Activated CD8-positive, alpha-beta T cell treated with anti-CD3 and anti-CD28 coated beads for 36 hours (primary cell): ENCODE measurements at regions of chr17 and their contacts with region 1.

Region 1: DNA sequence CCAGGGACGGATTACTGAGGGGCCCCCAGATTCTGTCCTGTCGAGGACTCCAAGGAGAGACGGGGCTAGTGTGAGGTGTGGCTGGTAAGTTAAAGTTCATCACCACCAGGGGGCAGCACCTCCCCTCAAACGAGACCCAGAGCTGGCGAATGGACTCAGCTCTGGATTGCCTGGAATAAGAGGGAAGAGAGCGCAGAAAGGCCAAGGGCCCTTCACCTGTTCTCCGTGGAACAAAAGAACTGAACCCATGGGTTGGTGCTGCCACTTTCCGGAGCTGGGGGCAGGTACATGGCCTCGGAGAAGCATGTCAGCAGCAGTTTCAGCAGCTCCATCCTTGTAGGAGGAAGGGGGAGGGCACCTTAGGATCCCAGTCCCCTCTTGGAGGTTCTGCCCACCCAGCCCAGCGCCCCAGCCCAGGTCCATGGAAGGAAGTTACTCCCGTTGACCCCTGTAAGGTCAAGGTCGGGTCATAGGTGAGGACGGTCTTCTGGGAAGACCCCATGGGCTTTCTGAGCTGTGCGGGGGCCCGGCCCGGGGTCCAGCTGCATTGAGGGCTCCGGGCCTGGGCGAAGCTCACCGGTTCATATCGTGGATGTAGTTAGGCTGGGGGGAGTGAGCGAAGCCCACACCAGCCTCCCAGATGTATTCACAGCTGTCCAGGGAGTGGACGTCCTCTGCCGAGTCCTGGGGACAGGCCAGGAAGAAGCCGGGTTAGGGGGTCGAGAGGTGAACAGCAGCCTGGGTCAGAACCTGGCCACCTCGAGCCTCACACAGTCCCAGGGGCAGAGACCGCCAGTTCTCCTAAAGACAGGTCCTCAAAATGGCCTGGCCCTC is 10.7 kb downstream of the HID1 start:
- DNase-seq: peak; percentile 91
- ATAC-seq: peak; percentile 79
- H3K4me3 Mint-ChIP-seq: no peak overlapping the region
- H3K27ac Mint-ChIP-seq: no peak overlapping the region
- H3K4me1 Mint-ChIP-seq: peaks cover 3% of the 10 kb centered on the region
- H3K27me3 Mint-ChIP-seq: no peaks in the 10 kb centered on the region
- CTCF ChIP-seq: peak; percentile 79

Region 2: GRCh38 chr17:74790161-74791054 is 171.5 kb before region 1 on chr17:
- CTCF ChIA-PET with region 1: interaction called, 18 read pairs
- POLR2A ChIA-PET with region 1: interaction called, 3 read pairs
- intact Hi-C with region 1: no loop called
- DNase-seq: no peak
- ATAC-seq: no peak
- H3K4me3 Mint-ChIP-seq: no peak overlapping the region
- H3K27ac Mint-ChIP-seq: peak overlapping the region; percentile 27
- H3K4me1 Mint-ChIP-seq: peaks cover 37% of the 10 kb centered on the region
- H3K27me3 Mint-ChIP-seq: no peaks in the 10 kb centered on the region
- CTCF ChIP-seq: no peak

Region 3: DNA sequence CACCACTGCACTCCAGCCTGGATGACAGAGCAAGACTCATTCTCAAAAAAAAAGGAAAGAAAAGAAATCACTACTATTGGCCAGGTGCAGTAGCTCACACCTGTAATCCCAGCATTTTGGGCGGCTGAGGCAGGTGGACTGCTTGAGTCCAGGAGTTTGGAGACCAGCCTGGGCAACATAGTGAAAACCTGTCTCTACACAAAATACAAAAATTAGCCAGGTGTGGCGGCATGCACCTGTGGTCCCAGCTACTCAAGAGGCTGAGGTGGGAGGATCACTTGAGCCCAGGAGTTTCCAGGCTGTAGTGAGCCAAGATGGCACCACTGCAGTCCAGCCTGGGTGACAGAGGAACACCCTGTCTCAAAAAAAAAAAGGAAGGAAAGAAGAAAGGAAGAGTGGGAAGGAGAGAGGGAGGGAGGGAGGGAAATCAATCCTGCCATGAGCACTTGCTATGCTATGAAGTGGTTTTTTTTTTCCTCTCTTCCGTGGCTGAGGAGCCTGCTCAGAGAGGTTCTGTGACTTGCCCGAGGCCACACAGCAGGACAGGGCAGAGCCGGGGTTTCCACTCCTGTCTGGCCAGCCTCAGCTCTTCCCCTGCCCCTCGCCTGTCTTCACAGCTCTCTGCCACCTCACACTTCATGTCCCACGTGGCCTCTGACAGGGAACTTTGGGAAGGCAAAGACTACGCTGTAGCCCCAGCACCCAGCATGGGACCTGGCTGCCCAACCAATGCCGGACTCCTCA is 113.0 kb before region 1 on chr17:
- CTCF ChIA-PET with region 1: no interaction called
- POLR2A ChIA-PET with region 1: no interaction called
- intact Hi-C with region 1: no loop called
- DNase-seq: no peak
- ATAC-seq: no peak
- H3K4me3 Mint-ChIP-seq: no peak overlapping the region
- H3K27ac Mint-ChIP-seq: no peak overlapping the region
- H3K4me1 Mint-ChIP-seq: peaks cover 2% of the 10 kb centered on the region
- H3K27me3 Mint-ChIP-seq: peaks cover 24% of the 10 kb centered on the region
- CTCF ChIP-seq: no peak

Region 4: DNA sequence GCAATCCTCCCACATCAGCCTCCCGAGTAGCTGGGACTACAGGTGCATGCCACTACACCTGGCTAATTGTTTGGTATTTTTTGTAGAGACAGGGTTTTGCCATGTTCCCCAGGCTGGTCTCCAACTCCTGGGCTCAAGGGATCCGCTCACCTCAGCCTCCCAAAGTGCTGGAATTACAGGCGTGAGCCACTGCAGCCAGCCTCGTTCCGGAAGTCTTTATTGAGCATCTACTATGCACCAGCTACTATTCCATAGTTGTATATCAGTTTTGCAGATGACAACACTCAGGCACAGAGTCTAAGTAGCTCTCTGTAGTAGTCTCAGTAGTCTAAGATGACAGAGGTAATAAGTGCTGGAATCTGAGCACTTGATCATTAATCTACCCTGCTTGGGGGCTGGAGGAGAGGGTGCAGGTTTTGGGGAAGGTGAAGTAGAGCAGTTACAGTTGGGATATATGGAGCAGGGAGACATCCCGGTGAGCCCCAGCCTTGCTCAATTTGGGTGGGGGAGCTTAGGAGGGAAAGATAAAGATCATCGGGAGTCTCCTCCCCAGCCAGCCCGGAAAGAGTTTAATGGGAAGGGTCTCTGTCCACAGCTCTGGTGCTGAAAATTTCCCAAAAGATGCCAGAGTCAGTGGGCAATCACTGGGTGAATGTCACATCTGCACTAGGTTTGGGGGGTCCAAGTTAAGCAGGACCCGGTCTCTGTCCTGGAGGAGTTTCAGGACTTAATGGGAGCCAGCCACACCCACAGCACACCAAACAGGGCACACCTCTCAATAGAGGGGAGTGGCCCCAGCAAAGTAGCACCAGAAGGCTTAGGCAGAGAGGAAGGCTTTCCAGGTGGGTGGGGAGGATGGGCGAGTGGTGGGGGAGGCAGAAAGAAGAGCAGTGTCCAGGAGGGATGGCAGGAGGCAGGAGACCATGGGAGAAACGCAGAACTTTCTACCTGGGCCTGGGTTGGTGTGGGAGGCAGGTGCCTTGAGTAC is 24.5 kb before region 1 on chr17:
- CTCF ChIA-PET with region 1: interaction called, 18 read pairs
- POLR2A ChIA-PET with region 1: no interaction called
- intact Hi-C with region 1: no loop called
- DNase-seq: no peak
- ATAC-seq: no peak
- H3K4me3 Mint-ChIP-seq: no peak overlapping the region
- H3K27ac Mint-ChIP-seq: no peak overlapping the region
- H3K4me1 Mint-ChIP-seq: no peaks in the 10 kb centered on the region
- H3K27me3 Mint-ChIP-seq: peaks cover 53% of the 10 kb centered on the region
- CTCF ChIP-seq: no peak

Region 5: DNA sequence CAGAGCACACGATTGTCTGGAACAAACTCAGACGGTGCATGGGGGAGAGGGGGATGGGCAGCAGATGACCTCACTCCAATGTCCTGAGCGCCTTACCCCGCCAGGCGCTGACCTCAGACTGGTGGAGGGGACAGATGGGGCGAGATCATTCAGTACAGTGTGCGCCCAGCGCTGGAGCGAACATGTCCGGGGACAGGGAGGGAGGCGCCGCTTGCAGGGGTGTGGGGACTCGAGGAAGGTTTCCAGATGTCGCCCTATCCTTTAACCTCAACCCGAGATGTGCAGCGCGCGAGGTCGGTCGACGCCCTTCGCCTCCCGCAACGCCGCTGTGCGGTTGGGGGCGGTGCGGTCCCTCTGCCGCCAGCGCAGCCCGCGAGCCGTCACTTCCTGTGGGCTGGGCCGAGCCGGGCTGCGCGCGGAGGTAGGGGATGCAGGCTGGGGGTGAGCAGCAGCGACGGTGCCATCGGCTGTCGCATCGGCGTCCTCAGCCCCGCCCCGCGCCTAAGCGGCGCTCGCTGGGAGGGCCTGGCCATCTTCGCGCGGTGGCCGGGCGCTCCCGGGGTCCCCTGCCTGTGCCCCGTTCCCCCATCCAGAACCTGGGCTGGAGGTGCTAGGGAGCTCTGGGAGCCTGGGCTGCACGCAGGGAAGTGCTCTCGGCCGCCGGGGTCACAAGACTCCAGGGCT is 20.2 kb after region 1 on chr17:
- CTCF ChIA-PET with region 1: interaction called, 26 read pairs
- POLR2A ChIA-PET with region 1: no interaction called
- intact Hi-C with region 1: no loop called
- DNase-seq: peak; percentile 83
- ATAC-seq: peak; percentile 94
- H3K4me3 Mint-ChIP-seq: peak overlapping the region; percentile 80
- H3K27ac Mint-ChIP-seq: peak overlapping the region; percentile 67
- H3K4me1 Mint-ChIP-seq: peaks cover 19% of the 10 kb centered on the region
- H3K27me3 Mint-ChIP-seq: peaks cover 12% of the 10 kb centered on the region
- CTCF ChIP-seq: no peak

Region 6: DNA sequence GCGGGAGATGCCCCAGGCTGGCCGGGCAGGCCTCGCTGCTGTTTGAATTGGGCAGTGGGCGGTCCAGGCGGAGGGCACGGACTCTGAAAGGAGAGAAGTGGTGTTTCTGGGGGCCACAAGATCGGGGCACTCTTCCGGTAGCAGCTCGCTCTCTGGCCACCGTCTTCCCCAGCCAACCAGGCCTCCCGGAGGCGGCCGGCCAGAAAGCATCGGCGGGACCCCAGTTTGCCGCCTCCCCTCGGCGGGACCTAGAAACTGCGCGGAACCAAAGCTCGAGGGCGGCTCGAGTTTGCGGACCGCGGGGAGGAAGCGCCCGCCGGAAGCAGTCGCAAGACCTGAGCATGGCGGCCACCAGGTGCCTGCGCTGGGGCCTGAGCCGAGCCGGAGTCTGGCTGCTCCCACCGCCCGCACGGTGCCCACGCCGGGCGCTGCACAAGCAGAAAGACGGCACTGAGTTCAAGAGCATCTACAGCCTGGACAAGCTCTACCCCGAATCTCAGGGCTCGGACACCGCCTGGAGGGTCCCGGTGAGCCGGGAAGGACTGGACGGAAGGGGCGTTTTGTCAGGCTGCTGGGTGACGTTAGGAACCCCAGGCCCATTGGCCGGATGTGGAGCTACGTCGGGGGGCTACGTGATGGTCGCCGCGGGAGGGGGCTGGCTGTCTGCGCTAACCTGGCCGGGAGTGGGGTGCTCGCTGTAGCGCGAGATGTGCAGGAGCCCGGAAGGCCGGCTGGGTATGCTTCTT is 50.6 kb after region 1 on chr17 and contains the start of gene MRPL58:
- CTCF ChIA-PET with region 1: interaction called, 122 read pairs
- POLR2A ChIA-PET with region 1: interaction called, 18 read pairs
- intact Hi-C with region 1: no loop called
- DNase-seq: peak; percentile 90
- ATAC-seq: peak; percentile 95
- H3K4me3 Mint-ChIP-seq: peak within 1 kb of the TSS; percentile 88
- H3K27ac Mint-ChIP-seq: peak within 1 kb of the TSS; percentile 92
- H3K4me1 Mint-ChIP-seq: peaks cover 33% of the 10 kb centered on the region
- H3K27me3 Mint-ChIP-seq: no peaks in the 10 kb centered on the region
- CTCF ChIP-seq: peak; percentile 51
- total RNA-seq, gene MRPL58: 53.6 to 62.4 TPM

Region 7: DNA sequence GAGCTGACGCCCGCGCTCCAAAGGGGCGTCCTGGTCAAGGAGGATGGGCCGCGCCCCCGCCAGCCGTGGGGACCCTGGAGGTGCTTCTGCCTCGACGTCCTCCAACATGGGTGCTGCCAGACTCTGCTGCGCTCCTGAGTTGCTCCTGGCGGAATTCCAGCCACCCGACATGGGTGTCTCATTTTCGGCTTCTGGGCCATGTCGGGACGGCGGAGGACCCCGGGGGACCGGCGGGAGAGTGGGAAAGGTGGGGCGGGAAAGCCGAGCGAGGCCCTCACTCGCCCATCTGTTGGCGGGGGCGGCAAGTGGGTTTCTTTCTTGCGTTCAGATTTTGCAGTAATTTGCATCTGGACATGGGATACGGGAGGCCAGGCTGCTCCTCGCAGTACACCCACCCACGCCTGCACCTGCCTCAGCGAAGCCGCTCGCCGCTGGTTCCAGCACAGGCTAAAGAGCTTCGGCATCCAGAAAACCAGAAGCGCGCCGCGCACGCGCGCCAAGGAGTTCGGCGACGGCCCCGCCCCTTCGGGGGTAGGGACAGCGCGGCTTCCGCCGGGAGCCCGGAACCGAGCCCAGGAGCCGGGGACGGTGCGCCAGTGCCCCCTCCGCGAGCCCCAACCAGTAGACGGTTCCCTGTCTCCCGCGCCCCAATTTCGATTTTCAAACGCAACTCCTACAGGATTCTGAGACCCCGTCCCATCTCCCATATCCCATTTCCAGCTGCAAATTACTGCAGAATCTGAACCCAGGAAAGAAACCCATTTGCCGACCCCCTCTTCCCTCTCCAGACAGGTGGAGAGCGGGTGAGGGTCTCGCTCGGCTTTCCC is 147.7 kb after region 1 on chr17 and contains the start of gene ARMC7:
- CTCF ChIA-PET with region 1: interaction called, 19 read pairs
- POLR2A ChIA-PET with region 1: interaction called, 3 read pairs
- intact Hi-C with region 1: no loop called
- DNase-seq: peak; percentile 91
- ATAC-seq: peak; percentile 84
- H3K4me3 Mint-ChIP-seq: peak within 1 kb of the TSS; percentile 87
- H3K27ac Mint-ChIP-seq: peak within 1 kb of the TSS; percentile 90
- H3K4me1 Mint-ChIP-seq: peaks cover 32% of the 10 kb centered on the region
- H3K27me3 Mint-ChIP-seq: no peaks in the 10 kb centered on the region
- CTCF ChIP-seq: no peak
- total RNA-seq, gene ARMC7: 5.4 TPM

Region 8: DNA sequence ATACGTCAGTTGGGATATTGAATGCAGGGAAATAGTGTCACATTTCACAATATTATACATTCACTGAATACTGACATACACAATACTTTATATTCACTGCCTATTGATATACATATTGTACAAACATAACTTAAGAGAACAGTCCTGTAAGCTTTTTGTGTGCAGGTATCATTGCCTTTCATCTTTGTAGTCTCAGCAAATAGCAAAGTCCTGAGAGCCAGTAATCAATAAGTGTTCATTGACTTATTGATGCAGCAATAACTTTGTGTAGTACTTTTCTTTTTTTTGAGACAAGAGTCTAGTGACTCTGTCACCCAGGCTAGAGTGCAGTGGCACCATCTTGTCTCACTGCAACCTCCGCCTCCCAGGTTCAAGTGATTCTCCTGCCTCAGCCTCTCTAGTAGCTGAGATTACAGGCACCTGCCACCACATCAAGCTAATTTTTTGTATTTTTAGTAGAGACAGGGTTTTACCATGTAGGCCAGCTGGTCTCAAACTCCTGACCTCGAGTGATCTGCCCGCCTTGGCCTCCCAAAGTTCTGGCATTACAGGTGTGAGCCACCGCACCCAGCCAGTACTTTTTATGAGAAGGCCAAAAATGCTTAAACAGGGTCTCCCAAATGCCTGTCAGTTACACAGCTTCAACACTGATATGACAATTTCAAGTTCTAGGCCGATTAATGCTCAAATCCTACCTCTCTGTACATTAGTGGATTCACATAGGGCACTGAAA is 238.2 kb after region 1 on chr17:
- CTCF ChIA-PET with region 1: interaction called, 33 read pairs
- POLR2A ChIA-PET with region 1: no interaction called
- intact Hi-C with region 1: no loop called
- DNase-seq: no peak
- ATAC-seq: no peak
- H3K4me3 Mint-ChIP-seq: no peak overlapping the region
- H3K27ac Mint-ChIP-seq: no peak overlapping the region
- H3K4me1 Mint-ChIP-seq: peaks cover 10% of the 10 kb centered on the region
- H3K27me3 Mint-ChIP-seq: no peaks in the 10 kb centered on the region
- CTCF ChIP-seq: no peak